ENCODE measurements at regions of chr5 and their contacts with region 1.

Region 1: GRCh38 chr5:147453875-147454814 is 55.7 kb downstream of the DPYSL3 start:
- DNase-seq: peak; percentile 93
- ATAC-seq: peak; percentile 89

Region 2: GRCh38 chr5:147403651-147404640 is 50.2 kb before region 1 on chr5:
- intact Hi-C with region 1: loop called (anchors 5 kb)
- DNase-seq: no peak
- ATAC-seq: peak; percentile 86

Region 3: GRCh38 chr5:147417135-147417813 is 36.9 kb before region 1 on chr5:
- intact Hi-C with region 1: no loop called
- DNase-seq: no peak
- ATAC-seq: peak; percentile 80

Region 4: GRCh38 chr5:147558826-147559225 is 104.7 kb after region 1 on chr5:
- intact Hi-C with region 1: loop called (anchors 5 kb)
- DNase-seq: peak; percentile 70
- ATAC-seq: peak; percentile 62

Measured in Right ventricle myocardium inferior (tissue), 1 donor.